K562 (cell line): ENCODE measurements at regions of chr20 and their contacts with region 1.

Region 1: GRCh38 chr20:44866703-44867335 is 18.7 kb upstream of the YWHAB start:
- DNase-seq: peak in 1 of 4 experiments; percentile 18
- ATAC-seq: no peak; the same call in 1 of the 3 replicates
- H3K4me3 ChIP-seq: no peak overlapping the region
- H3K27ac ChIP-seq: no peak overlapping the region
- H3K4me1 ChIP-seq: peaks cover 0 to 2% of the 10 kb centered on the region in 2 experiments; a peak in 2 of 5 replicates
- H3K27me3 ChIP-seq: peaks cover 11 to 14% of the 10 kb centered on the region in 2 experiments
- CTCF ChIP-seq: no peak
- EP300 ChIP-seq: no peak
- POLR2A ChIP-seq: no peak
- RAD21 ChIP-seq: no peak

Region 2: DNA sequence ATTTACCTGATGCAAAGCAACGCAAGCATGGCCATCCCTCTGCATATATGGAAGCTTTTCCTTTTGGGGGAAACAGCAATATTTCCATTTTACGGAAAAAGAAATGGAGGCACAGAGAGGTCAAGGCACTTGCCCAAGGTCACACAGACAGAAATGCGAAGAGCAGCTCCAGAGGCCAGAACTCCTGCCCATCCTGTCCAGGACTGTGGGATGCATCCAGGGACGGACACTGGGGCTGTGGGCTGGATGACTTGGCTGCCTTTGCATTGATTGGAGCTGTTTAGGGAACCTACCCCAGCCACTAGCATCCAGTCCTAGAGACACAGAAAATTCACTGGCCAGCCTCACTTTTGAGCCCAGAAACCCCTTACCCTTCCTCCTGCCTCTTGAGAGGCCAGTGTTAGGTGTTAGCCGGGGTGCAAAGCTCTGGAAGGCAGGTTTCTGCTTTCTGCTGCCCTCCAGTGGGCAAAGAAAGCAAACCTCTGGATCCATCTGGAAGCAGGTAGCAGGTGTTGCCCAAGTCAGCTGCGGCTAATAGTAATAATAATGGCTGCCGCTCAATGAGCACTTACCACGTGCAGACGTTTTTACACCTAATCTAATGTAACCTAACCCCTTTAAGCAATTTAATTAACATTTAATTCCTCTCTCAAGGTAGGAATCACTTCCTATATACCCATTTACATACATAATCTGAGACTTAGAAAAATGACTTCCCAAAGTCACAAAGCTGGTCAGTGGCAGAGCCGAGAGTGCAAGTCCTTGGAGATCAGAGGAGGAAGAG is 183.4 kb before region 1 on chr20:
- CTCF ChIA-PET with region 1: interaction called, 22 read pairs
- POLR2A ChIA-PET with region 1: no interaction called
- in situ Hi-C with region 1: loop called (anchors 5 kb)
- intact Hi-C with region 1: loop called (anchors 1 kb)
- DNase-seq: peak; percentile 68 to 87 (median 80)
- ATAC-seq: peak; percentile 93
- H3K4me3 ChIP-seq: no peak overlapping the region
- H3K27ac ChIP-seq: no peak overlapping the region
- H3K4me1 ChIP-seq: peaks cover 5% of the 10 kb centered on the region in 2 experiments; a peak in 3 of 5 replicates
- H3K27me3 ChIP-seq: peaks cover 13 to 14% of the 10 kb centered on the region in 2 experiments; a peak in 4 of 5 replicates
- CTCF ChIP-seq: peak; percentile 75 to 77 (median 76)
- EP300 ChIP-seq: no peak
- POLR2A ChIP-seq: no peak
- RAD21 ChIP-seq: peak; percentile 46 to 78

Region 3: GRCh38 chr20:44733341-44734069 is 133.3 kb before region 1 on chr20:
- CTCF ChIA-PET with region 1: no interaction called
- POLR2A ChIA-PET with region 1: no interaction called
- in situ Hi-C with region 1: no loop called
- intact Hi-C with region 1: loop called (anchors 5 kb)
- DNase-seq: peak; percentile 52 to 70 (median 60)
- ATAC-seq: peak; percentile 81
- H3K4me3 ChIP-seq: no peak overlapping the region
- H3K27ac ChIP-seq: no peak overlapping the region
- H3K4me1 ChIP-seq: no peaks in the 10 kb centered on the region; a peak in 1 of 5 replicates
- H3K27me3 ChIP-seq: peaks cover 12 to 27% of the 10 kb centered on the region in 2 experiments; a peak in 4 of 5 replicates
- CTCF ChIP-seq: peak; percentile 86 to 87 (median 87)
- EP300 ChIP-seq: no peak
- POLR2A ChIP-seq: no peak
- RAD21 ChIP-seq: peak; percentile 86 to 88

Region 4: GRCh38 chr20:44747166-44748004 is 119.4 kb before region 1 on chr20:
- CTCF ChIA-PET with region 1: interaction called, 19 read pairs
- POLR2A ChIA-PET with region 1: no interaction called
- in situ Hi-C with region 1: loop called (anchors 10 kb)
- intact Hi-C with region 1: loop called (anchors 1 kb)
- DNase-seq: peak; percentile 65 to 75 (median 74)
- ATAC-seq: peak; percentile 82
- H3K4me3 ChIP-seq: no peak overlapping the region
- H3K27ac ChIP-seq: no peak overlapping the region
- H3K4me1 ChIP-seq: peaks cover 3 to 22% of the 10 kb centered on the region in 2 experiments; a peak in 4 of 5 replicates
- H3K27me3 ChIP-seq: peaks cover 5 to 49% of the 10 kb centered on the region in 2 experiments; a peak in 4 of 5 replicates
- CTCF ChIP-seq: peak; percentile 68 to 87 (median 76)
- EP300 ChIP-seq: no peak
- POLR2A ChIP-seq: no peak
- RAD21 ChIP-seq: peak; percentile 25 to 55; a peak in 3 of 4 replicates

Region 5: GRCh38 chr20:44800398-44801046 is 66.3 kb before region 1 on chr20:
- CTCF ChIA-PET with region 1: interaction called, 17 read pairs
- POLR2A ChIA-PET with region 1: no interaction called
- in situ Hi-C with region 1: no loop called
- intact Hi-C with region 1: loop called (anchors 1 kb)
- DNase-seq: peak; percentile 27 to 44 (median 40)
- ATAC-seq: peak; percentile 71
- H3K4me3 ChIP-seq: no peak overlapping the region
- H3K27ac ChIP-seq: no peak overlapping the region
- H3K4me1 ChIP-seq: no peaks in the 10 kb centered on the region
- H3K27me3 ChIP-seq: peaks cover 7 to 19% of the 10 kb centered on the region in 2 experiments; a peak in 4 of 5 replicates
- CTCF ChIP-seq: peak; percentile 46 to 68 (median 67); a peak in 5 of 6 replicates
- EP300 ChIP-seq: no peak
- POLR2A ChIP-seq: no peak
- RAD21 ChIP-seq: peak; percentile 20 to 51; a peak in 3 of 4 replicates